B cell (primary cell): ENCODE measurements at regions of chrX and their contacts with region 1.

Region 1: DNA sequence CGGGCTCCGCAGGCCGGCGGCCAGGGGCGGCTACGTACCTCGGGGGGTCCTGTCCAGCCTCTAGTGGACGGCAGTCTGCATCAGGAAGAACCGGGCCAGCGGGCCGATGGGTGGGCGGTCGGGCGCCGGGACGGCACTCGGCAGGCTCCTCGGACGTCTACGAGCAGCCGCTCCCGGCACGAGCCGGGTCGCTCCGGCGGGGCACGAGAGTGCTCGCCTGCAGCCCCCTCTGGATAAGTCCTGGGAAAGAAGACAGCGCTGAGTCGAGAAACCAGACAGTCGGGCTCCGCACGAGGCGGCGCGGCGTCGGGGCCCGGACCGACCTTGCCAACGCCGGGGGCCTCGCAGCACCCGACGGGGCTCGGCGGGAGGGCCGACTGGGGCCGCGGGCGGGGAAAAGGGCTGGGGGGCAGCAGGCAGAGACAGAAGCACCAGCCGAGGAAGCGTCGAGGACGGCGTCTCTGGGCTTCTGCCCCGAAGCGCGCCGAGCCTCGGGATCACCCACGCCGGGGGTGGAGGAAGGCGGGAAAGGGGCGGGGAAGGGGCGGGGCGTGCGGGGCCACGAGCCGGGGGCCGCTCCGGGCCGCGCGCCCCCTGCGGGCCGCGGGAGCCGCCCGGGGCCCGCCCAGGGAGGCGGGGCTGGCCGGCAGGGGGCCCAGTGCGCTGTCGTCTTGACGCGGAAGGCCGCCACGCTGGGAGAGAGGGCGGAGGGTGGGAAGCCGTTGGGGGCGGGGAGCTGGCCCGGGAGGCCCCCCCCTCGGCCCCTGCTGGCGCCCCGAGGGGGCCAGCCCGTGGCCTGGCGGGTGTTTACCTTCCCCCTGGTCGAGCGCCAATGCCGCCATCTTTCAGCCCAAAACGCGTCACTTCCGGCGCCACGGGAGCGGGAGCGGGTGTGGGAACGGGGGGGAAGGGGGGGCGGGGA is 1.9 kb downstream of the KLHL15 start:
- DNase-seq: peak; percentile 88
- ATAC-seq: peak; percentile 89
- H3K4me3 ChIP-seq: peak overlapping the region; percentile 54 to 81 (median 79)
- H3K4me3 Mint-ChIP-seq: peak overlapping the region; percentile 85
- H3K27ac ChIP-seq: peak overlapping the region; percentile 77 to 93
- H3K27ac Mint-ChIP-seq: peak overlapping the region; percentile 82
- H3K4me1 ChIP-seq: peaks cover 4 to 10% of the 10 kb centered on the region in 2 donors
- H3K4me1 Mint-ChIP-seq: peaks cover 36% of the 10 kb centered on the region
- H3K27me3 ChIP-seq: no peaks in the 10 kb centered on the region
- H3K27me3 Mint-ChIP-seq: no peaks in the 10 kb centered on the region
- CTCF ChIP-seq: no peak

Region 2: DNA sequence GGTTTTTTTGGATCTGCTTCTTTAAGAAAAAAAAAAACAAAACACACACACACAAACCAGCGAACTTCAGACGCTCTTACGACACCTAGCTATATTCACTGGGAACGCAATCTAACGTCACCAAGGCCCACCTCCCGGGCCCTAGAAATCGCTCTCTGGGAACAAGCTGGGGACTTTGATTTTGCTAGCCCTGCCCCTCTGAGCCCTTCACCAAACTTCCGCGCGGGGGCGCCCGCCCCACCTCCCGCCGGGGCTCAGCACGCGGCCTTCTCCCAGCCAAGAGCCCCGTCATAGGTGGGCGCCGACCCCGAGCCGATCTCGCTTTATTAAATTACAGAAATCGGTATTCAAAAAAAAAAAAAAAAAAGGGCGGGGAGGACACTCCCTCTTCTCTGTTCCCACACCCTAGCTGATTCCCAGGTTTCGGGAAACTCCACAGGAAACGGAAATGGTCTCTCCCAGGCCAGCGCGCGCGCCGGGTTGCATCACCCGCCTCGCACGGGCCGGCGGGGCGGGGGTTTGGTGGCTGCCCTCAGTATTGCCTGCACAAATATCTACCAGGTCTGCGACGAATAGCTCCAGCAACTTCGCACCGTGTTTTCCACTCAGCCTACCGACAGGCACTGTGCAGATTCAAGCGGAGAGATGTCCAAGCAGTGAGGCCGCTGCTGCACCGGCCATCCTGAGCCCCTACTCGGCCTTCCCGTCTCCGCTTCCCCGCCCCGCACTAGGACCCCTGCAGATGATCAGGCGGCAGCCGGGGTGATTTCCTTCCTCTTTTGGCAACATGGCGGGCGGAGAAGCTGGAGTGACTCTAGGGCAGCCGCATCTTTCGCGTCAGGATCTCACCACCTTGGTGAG is 29.3 kb after region 1 on chrX and contains the start of gene EIF2S3:
- CTCF ChIA-PET with region 1: interaction called, 41 read pairs
- POLR2A ChIA-PET with region 1: interaction called, 40 read pairs
- intact Hi-C with region 1: loop called (anchors 1 kb)
- DNase-seq: peak; percentile 95
- ATAC-seq: peak; percentile 80
- H3K4me3 ChIP-seq: peak within 1 kb of the TSS; percentile 76 to 98 (median 89)
- H3K4me3 Mint-ChIP-seq: peak within 1 kb of the TSS; percentile 99
- H3K27ac ChIP-seq: no peak within 1 kb of the TSS
- H3K27ac Mint-ChIP-seq: peak within 1 kb of the TSS; percentile 100
- H3K4me1 ChIP-seq: no peaks in the 10 kb centered on the region
- H3K4me1 Mint-ChIP-seq: peaks cover 3% of the 10 kb centered on the region
- H3K27me3 ChIP-seq: no peaks in the 10 kb centered on the region
- H3K27me3 Mint-ChIP-seq: no peaks in the 10 kb centered on the region
- CTCF ChIP-seq: peak; percentile 71
- total RNA-seq, gene EIF2S3: 260 and 272 TPM in 2 replicates